Cardiac septum (tissue), 1 donor: ENCODE measurements at regions of chr17 and their contacts with region 1.

Region 1: DNA sequence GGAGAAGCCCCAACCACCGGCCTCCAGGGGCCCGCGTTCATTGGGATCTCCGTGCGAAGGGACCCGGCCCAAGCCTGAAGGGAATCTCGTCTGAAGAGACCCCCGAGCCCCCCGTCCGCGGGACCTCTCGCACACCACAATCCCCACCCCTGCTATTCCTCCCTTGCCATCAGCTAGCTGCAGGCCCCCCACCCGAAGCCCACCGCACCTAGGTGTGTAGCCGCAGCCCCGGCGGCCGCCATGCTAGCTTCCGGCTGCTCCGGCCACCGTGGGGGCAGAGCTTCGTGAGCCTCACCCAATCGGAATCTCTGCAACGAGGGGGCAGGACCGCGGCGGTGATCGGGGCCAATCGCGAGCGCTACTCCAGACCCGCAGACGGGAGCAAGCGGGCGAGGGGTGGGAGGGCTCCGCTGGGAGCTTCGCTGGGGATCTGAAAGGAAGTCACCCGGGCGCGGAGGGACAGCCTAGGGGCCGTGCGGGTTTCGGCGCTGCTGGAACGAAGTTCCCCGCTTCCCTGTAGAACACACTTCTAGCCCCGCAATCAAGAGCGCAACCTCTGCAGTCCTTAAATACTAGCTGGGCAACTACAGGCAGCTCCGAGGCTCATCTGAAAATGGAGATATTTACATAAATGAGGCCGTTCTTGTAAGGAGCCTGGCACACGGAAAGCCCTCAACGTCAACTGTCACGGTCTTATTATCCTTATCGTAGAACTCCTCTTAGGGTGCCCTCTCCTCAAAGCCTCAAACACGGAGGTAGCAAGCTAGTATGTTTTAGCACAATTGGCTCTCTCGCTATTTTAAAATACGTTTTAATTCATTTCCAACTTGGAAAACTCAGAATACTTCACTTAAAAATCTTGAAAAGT is at the start of gene PIGS:
- DNase-seq: peak; percentile 99
- total RNA-seq, gene PIGS: 51.5 TPM

Region 2: DNA sequence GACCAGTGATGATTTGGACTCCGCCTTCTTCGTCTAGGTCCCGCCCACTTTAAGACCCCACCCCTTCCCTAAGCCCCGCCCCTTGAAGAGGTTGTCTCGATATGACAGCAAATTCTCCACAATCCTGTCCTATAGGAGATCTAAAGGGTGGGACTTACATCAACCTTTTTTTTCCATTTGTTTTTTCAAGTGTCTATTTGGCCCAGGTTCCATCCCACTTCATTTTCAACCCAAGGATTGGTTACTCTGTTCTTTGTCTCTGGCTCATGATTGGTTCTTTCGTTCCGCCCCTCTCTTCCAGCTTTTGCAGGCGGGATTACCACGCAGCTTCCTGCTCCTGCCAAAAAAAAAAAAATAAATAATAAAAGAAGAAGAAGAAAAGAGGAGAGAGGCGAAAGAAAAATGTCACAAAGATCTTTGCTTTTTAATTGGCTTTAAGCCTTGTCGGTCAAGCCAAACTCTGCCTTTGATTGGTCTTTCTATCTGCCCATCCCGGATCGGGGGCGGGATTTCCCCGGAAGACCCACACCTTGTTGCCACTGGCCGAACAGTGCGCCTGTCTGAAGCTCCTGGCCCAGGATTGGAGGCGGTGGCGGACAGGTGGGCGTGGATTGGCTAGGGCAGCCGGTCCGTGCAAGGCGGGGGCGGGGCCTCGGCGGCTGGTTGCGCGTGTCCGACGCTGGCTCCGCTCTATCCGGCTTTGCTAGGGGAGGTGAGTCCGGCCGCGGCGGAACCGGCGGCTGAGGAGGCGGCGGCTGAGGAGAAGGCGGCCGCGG is 530.2 kb before region 1 on chr17:
- intact Hi-C with region 1: no loop called
- DNase-seq: peak; percentile 100

Region 3: GRCh38 chr17:28552246-28552999 is 19.1 kb before region 1 on chr17 and contains the start of gene UNC119:
- intact Hi-C with region 1: loop called (anchors 2 kb)
- DNase-seq: peak; percentile 93
- total RNA-seq, gene UNC119: 16.0 TPM